HCT116 (cell line): ENCODE measurements at regions of chr16 and their contacts with region 1.

Region 1: GRCh38 chr16:3134564-3135417 is at the start of gene ZNF213:
- DNase-seq: peak; percentile 95
- ATAC-seq: peak; percentile 92
- H3K4me3 ChIP-seq: peak within 1 kb of the TSS; percentile 89 to 99
- H3K27ac ChIP-seq: peak within 1 kb of the TSS; percentile 92
- H3K4me1 ChIP-seq: peaks cover 14 to 18% of the 10 kb centered on the region in 2 experiments
- H3K27me3 ChIP-seq: no peaks in the 10 kb centered on the region
- CTCF ChIP-seq: no peak
- POLR2A ChIP-seq: peak; percentile 77
- RAD21 ChIP-seq: no peak
- total RNA-seq, gene ZNF213: 11.0 TPM

Region 2: GRCh38 chr16:3150346-3151218 is 15.8 kb after region 1 on chr16:
- CTCF ChIA-PET with region 1: interaction called, 15 read pairs
- POLR2A ChIA-PET with region 1: interaction called, 34 read pairs
- RAD21 ChIA-PET with region 1: interaction called, 4 to 7 read pairs
- intact Hi-C with region 1: loop called (anchors 2 kb)
- DNase-seq: peak; percentile 92
- ATAC-seq: peak; percentile 77
- H3K4me3 ChIP-seq: peak overlapping the region; percentile 54 to 65
- H3K27ac ChIP-seq: peak overlapping the region; percentile 95
- H3K4me1 ChIP-seq: peaks cover 8 to 38% of the 10 kb centered on the region in 2 experiments
- H3K27me3 ChIP-seq: no peaks in the 10 kb centered on the region
- CTCF ChIP-seq: no peak
- POLR2A ChIP-seq: no peak
- RAD21 ChIP-seq: no peak

Region 3: DNA sequence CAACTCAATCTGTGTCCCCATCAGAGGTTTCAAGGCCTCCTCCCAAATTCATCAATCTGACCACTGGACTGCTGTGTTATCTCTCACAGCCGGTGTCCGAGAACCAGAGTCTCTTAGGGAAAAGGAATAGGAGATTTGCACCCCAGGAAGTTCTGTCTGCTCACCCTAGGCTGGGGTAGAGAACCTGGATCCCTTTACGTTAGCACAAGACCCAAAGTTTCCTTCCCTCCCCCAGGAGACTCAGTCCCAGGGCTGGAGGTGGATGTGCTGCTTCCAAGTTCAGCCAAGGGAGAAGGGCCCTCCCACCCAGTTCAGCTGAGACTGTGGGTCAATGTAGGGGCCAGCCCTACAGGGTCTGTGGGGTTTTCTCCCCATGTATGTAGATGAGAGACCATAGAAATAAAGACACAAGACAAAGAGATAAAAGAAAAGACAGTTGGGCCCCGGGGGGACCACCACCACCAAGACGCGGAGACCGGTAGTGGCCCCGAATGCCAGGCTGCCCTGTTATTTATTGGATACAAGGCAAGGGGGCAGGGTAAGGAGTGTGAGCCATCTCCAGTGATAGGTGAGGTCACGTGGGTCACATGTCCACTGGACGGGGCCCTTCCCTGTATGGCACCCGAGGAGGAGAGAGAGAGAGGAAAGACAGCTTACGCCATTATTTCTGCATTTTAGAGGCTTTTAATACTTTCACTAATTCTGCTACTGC is 30.5 kb after region 1 on chr16:
- CTCF ChIA-PET with region 1: interaction called, 14 read pairs
- POLR2A ChIA-PET with region 1: interaction called, 6 read pairs
- RAD21 ChIA-PET with region 1: no interaction called
- intact Hi-C with region 1: loop called (anchors 5 kb)
- DNase-seq: no peak
- ATAC-seq: peak; percentile 5
- H3K4me3 ChIP-seq: no peak overlapping the region
- H3K27ac ChIP-seq: peak overlapping the region; percentile 30; the same call in 1 of the 2 replicates
- H3K4me1 ChIP-seq: peaks cover 11 to 39% of the 10 kb centered on the region in 2 experiments; a peak in 3 of 4 replicates
- H3K27me3 ChIP-seq: no peaks in the 10 kb centered on the region
- CTCF ChIP-seq: no peak
- POLR2A ChIP-seq: no peak
- RAD21 ChIP-seq: no peak